Colonic mucosa (tissue), 4 donors: ENCODE measurements at regions of chr2 and their contacts with region 1.

Region 1: DNA sequence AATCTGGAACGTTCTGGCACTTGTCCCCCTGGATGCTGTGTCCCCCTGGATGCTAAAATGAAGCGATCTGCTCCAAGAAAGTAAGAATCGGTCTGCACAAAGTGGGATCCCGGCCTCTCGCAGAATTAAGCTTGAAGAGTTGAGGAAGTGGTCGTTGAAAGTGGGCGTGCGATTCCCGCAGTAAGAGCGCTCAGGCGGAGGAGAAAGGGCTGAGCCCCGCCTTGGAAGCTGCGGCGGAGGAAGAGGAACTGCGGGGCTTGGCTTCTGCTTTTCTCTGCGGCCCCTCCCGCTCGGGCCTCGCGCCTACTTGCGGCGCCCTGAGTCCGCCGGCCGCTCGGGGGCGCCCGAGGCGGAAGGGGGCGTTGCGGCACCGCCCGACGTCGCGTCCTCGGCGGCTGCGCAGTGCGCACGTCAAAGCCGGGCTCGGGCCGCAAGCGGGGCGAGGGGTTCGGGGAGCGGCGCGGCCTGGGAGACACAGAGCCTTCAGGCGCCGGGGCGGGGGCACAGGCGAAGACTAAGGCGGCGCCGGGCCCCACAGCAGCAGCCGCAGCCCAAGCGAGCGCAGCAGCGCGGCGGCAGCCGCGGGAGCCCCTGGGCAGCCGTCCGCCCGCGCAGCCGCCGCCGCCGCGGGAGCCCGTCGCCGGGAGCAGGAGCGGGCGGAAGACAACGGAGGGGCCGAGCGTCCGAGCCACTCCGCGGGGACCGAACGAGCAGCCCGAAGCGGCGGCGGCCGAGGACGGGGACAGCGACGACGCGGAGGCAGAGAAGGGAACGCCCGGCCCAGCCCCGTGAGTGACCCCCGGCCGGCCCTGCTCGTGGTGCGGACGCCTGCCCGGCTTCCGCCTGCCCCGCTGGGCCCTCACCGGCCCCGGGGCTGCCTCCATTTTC is at the start of gene CAB39:
- DNase-seq: peak; percentile 87
- H3K4me3 ChIP-seq: peak within 1 kb of the TSS; percentile 98
- H3K27ac ChIP-seq: peak within 1 kb of the TSS; percentile 97
- H3K4me1 ChIP-seq: peaks cover 10% of the 10 kb centered on the region
- H3K27me3 ChIP-seq: no peaks in the 10 kb centered on the region
- CTCF ChIP-seq: peak; percentile 74
- total RNA-seq, gene CAB39: 87.8 to 121 TPM

Region 2: DNA sequence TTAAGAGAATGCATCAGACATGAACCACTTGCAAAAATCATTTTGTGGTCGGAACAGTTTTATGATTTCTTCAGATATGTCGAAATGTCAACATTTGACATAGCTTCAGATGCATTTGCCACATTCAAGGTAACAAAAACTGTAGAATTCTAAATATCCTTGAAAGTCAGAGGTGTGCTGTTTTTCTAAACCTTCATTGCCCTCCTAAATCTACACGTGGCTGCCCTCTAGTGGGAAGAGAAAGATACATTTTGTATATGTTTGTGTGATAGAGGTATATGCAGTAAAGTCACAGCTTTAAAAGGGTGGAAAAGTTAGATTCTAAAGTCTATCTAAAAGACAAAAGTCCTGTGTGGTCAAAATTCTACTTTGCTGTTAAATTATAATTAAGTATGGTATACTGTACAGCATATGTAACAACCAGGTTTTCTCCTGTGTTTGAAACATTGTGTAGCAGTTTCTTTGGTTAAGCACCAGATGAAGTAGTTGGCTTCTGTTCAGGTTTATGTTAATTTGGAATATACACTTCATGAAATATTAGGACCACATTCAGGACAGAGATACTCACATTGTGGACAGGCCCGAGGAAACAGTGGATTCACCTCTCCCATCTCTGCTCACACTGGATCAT is 86.2 kb after region 1 on chr2:
- intact Hi-C with region 1: loop called (anchors 5 kb)
- DNase-seq: peak; percentile 57
- H3K4me3 ChIP-seq: no peak overlapping the region
- H3K27ac ChIP-seq: no peak overlapping the region
- H3K4me1 ChIP-seq: peaks cover 13% of the 10 kb centered on the region
- H3K27me3 ChIP-seq: no peaks in the 10 kb centered on the region
- CTCF ChIP-seq: peak; percentile 58

Region 3: DNA sequence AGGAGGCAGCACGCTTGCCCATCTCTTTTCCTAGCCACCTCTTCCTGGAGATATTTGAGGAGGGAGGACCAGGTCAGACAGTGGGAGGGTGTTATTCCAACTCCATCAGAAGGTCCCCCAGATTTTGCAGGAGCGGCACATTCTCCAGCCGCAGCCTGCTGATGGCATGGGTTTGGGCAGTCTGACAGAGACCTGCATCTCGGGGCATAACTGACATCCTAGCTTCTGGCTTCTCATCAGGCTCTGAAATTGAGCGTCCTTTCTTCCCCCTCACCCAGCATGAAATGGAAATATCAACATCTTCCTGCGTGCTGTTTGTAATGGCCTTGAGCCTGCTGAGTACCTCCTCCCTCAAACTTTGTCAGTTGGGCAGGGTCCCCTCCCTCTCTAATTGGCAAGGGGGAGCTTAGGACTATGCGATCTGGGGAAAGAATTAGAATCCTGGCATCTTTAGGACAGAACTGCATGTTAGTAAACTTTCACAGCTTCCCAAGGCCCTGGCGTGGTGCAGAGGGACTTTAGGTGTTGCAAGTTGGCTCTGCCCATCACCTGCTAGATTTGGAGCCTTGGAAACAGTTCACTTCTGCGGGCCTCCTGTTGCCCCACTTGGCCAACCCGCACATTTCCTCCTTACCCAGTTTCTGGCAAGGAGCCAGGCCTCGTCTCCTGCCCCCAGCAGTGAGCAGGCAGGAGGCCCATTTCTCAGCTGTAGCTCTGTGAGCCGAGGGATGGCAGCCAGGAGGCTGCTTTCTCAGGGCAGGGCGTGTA is 154.3 kb after region 1 on chr2:
- intact Hi-C with region 1: no loop called
- DNase-seq: peak; percentile 85
- H3K4me3 ChIP-seq: peak overlapping the region; percentile 98
- H3K27ac ChIP-seq: peak overlapping the region; percentile 97
- H3K4me1 ChIP-seq: peaks cover 44% of the 10 kb centered on the region
- H3K27me3 ChIP-seq: no peaks in the 10 kb centered on the region
- CTCF ChIP-seq: no peak

Region 4: DNA sequence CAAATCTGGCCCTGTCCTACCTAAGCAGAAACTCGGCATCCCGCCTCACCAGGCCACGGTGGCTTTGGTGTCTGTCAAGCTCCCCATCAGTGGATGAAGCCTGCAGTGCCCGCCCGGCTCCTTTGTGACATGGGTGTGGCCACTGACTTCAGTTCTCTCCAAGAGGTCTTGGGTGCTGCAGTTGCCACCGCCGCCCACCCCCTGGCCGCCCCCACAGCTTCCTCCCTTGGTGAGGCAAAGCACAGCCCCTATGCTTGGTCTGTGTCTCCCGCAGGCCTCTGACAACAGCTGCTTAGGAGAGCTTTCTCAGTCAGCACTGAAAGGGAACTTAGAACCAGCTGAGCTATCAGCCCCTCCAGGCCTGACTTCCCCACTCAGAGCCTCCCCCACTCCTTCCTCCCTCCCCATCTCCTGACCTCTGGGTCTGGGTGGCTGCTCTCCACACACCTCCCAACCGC is 235.2 kb after region 1 on chr2:
- intact Hi-C with region 1: no loop called
- DNase-seq: no peak
- H3K4me3 ChIP-seq: no peak overlapping the region
- H3K27ac ChIP-seq: no peak overlapping the region
- H3K4me1 ChIP-seq: no peaks in the 10 kb centered on the region
- H3K27me3 ChIP-seq: no peaks in the 10 kb centered on the region
- CTCF ChIP-seq: no peak